Aorta (tissue), 5 donors: ENCODE measurements at regions of chr5 and their contacts with region 1.

Region 1: DNA sequence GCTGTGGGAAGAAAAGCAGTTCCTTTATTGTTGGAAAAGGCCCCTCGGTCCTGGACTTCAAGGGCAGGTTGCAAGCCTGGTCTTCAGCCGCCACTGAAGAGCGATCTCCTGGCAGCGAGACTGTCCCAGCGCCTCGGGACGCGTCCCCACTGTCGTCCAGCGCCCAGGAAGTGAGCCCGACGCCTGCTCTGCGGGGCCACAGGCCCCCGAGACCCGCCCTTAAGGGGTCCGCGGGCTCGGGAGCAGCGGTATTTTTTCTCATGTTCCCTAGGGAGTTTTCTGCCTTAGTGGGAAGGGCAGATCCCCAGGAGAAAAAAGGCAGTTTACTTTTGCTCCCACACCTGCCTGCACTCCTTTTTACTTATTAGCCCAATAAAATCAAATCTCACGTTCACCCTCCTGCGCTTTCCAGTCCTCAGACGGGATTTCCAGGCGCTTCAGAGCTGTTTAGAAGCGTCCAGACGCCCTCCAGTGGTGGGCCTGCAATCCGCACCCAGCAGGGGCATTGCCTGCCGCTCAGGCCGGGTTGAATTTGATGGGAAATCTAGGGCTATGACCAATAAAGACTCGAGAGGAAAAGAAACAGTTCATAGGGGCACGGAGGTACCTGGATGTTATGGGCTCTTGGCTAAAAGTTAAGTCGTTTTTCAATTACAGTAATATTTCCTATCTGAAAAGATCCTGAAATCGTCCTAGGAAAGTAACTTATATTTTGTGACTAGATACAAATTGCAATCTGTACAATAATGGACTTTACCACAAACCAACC is 2.8 kb upstream of the EFNA5 start:
- DNase-seq: peak; percentile 89 to 97
- ATAC-seq: peak; percentile 87
- H3K4me3 ChIP-seq: peak overlapping the region; percentile 1 to 63
- H3K27ac ChIP-seq: peak overlapping the region in 1 of 2 donors; percentile 62
- H3K4me1 ChIP-seq: no peaks in the 10 kb centered on the region
- H3K27me3 ChIP-seq: no peaks in the 10 kb centered on the region

Region 2: DNA sequence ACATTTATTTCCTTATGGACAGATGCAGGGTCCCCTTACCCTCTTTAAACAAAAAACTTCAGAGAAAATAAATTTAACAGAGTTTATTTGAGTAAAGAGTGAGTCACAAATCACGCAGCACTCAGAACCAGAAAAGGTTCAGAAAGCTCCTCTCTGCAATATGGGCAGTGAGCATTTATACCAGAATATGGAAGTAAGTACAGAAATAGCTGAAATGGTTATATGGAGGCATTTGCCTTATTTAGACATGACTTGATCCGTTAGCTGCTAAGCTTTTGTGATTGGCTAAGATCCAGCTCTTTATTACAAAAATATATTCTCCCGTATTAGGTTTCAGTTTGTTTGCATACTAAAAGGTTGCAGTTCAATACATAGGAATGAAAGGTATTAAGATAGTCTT is 1556.9 kb before region 1 on chr5:
- intact Hi-C with region 1: loop called in 1 of 2 experiments (anchors 10 kb)
- DNase-seq: no peak
- ATAC-seq: no peak
- H3K4me3 ChIP-seq: peak overlapping the region in 1 of 2 donors; percentile 10
- H3K27ac ChIP-seq: no peak overlapping the region
- H3K4me1 ChIP-seq: no peaks in the 10 kb centered on the region
- H3K27me3 ChIP-seq: no peaks in the 10 kb centered on the region